Right ventricle myocardium inferior (tissue), 1 donor: ENCODE measurements at regions of chr9 and their contacts with region 1.

Region 1: GRCh38 chr9:89993678-89994630 is 389.1 kb downstream of the GADD45G start:
- DNase-seq: peak; percentile 78
- ATAC-seq: peak; percentile 59

Region 2: GRCh38 chr9:89929673-89930480 is 64.1 kb before region 1 on chr9:
- intact Hi-C with region 1: loop called (anchors 5 kb)
- DNase-seq: no peak
- ATAC-seq: peak; percentile 82